PC-3 (cell line): ENCODE measurements at regions of chr3 and their contacts with region 1.

Region 1: DNA sequence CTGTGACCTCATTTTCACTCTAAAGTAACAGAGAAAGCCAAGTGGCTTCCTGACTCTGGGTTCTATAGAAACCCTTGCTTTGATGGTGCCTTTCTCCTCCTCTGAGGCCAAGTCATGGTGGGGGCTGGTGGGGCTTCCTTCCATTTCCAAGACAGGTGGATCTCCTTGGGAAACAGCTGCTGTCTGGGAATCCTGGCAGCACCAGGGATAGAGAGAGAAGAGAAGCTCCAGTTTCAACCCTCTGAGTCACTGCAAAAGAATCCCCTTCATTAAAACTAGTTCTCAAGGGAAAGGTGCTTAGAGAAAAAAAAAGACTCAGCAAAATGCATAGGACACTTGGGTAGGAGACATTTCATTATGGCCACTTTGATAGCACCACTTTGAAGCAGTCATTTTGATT is 614.4 kb downstream of the FHIT start:
- DNase-seq: peak; percentile 73
- ATAC-seq: peak; percentile 65
- H3K4me3 ChIP-seq: no peak overlapping the region
- H3K27ac ChIP-seq: no peak overlapping the region
- H3K4me1 ChIP-seq: peaks cover 14% of the 10 kb centered on the region
- H3K27me3 ChIP-seq: no peaks in the 10 kb centered on the region
- CTCF ChIP-seq: no peak

Region 2: GRCh38 chr3:60555684-60556354 is 81.0 kb before region 1 on chr3:
- CTCF ChIA-PET with region 1: no interaction called
- POLR2A ChIA-PET with region 1: no interaction called
- intact Hi-C with region 1: loop called (anchors 1 kb)
- DNase-seq: peak; percentile 65
- ATAC-seq: peak; percentile 92
- H3K4me3 ChIP-seq: no peak overlapping the region
- H3K27ac ChIP-seq: no peak overlapping the region
- H3K4me1 ChIP-seq: peaks cover 9% of the 10 kb centered on the region
- H3K27me3 ChIP-seq: no peaks in the 10 kb centered on the region
- CTCF ChIP-seq: no peak

Region 3: GRCh38 chr3:60650171-60650570 is 13.3 kb after region 1 on chr3:
- CTCF ChIA-PET with region 1: no interaction called
- POLR2A ChIA-PET with region 1: no interaction called
- intact Hi-C with region 1: no loop called
- DNase-seq: no peak
- ATAC-seq: no peak
- H3K4me3 ChIP-seq: no peak overlapping the region
- H3K27ac ChIP-seq: no peak overlapping the region
- H3K4me1 ChIP-seq: no peaks in the 10 kb centered on the region
- H3K27me3 ChIP-seq: no peaks in the 10 kb centered on the region
- CTCF ChIP-seq: no peak; the same call in 1 of the 2 replicates

Region 4: DNA sequence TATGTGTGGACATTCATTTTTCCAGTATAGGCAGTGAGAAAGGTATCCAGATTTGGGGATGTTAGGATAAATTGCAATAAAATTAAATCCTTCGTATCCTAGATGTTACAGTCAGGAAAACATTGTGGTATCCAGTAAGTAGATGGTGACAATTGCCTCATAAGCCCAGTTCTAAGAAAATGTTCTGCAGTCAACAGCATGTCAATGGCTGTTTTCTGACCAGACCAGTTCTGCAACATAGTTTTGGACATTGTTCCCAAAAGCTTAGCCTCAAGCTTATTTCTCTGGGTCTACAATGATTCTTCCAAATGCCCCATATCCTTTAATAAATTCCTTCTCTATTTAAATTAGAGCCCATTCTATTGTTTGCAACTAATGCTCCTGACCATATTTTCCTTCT is 133.7 kb after region 1 on chr3:
- CTCF ChIA-PET with region 1: no interaction called
- POLR2A ChIA-PET with region 1: no interaction called
- intact Hi-C with region 1: loop called (anchors 10 kb)
- DNase-seq: peak; percentile 83
- ATAC-seq: peak; percentile 46; the same call in 1 of the 2 replicates
- H3K4me3 ChIP-seq: no peak overlapping the region
- H3K27ac ChIP-seq: no peak overlapping the region
- H3K4me1 ChIP-seq: peaks cover 14% of the 10 kb centered on the region
- H3K27me3 ChIP-seq: no peaks in the 10 kb centered on the region
- CTCF ChIP-seq: no peak